H1 (cell line): ENCODE measurements at regions of chr13 and their contacts with region 1.

Region 1: DNA sequence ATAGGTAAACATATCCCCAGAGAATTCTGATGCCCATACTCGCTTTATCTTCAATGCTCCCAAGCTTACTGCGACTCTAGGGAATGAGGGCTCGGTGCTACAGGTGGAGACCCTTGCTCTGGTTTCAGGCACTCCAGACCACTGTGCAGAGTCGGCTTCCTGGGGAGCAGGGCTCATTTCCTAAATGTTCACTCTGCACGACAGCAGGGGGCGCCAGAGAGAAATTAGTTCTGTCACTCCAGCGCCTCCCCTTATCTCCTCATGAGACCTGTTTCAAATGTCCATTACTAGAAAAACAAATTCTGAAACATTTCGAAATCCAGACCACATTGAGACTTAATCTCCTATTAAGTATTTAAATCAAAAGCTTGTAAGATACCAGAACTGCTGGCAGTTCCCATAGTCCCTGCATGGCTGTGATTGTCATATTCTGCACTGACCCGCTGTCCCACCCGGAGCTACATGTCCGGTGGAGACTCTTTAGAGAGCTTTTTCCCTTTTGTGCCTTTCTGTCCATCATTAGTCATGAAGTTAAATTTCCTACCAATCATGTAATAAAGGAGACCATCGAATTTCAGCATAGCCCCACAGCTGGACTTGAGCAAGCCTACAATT is 22.4 kb downstream of the EPSTI1 start:
- DNase-seq: peak in 1 of 2 experiments; percentile 93
- H3K4me3 ChIP-seq: no peak overlapping the region
- H3K27ac ChIP-seq: no peak overlapping the region
- H3K4me1 ChIP-seq: peaks cover 3 to 12% (median 4%) of the 10 kb centered on the region in 4 experiments; a peak in 5 of 7 replicates
- H3K27me3 ChIP-seq: no peaks in the 10 kb centered on the region
- CTCF ChIP-seq: peak; percentile 71 to 82 (median 81)
- EP300 ChIP-seq: no peak
- POLR2A ChIP-seq: no peak
- RAD21 ChIP-seq: peak; percentile 67 to 72

Region 2: DNA sequence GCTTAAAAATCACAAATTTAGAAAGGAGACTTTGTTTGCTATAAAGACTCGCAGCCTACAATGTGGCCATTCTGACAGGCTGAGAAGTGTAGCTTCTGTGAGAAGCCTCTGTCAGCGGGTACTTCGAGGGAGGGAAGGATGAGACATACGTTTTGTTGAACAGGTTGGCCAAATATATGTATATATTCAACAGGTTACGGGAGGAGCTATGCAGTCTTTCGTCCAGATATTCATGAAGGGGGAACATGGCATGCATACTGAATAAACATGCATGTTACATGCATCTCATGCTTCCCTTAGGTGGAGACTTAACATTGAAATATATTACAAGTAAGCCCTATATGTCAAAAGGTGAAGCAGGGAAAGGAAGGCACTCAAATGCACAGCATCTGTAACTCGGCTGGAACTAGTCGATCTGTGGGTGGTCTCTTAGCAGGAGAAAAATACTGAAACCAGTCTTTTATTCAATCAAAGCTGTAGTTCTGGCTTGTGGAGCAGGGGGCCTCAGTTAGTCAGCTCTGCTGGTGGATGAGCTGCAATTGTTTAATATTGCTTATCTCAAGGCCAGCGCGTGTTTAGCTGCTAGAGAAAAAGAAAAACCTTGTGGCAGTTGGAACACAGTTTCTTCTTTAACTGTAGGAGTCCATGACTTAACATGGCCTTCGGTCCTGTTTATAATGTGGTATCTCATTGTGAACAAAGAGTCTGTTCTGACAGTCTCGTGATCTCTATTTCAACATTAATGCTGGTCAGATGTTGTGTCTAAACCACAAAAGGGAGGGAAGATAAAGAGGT is 94.0 kb before region 1 on chr13:
- CTCF ChIA-PET with region 1: interaction called, 17 read pairs
- POLR2A ChIA-PET with region 1: interaction called, 3 read pairs
- DNase-seq: peak in 1 of 2 experiments; percentile 43
- H3K4me3 ChIP-seq: peak overlapping the region; percentile 10 to 50 (median 16); a peak in 6 of 8 replicates
- H3K27ac ChIP-seq: peak overlapping the region; percentile 39; the same call in 1 of the 2 replicates
- H3K4me1 ChIP-seq: peaks cover 7 to 21% (median 16%) of the 10 kb centered on the region in 4 experiments; a peak in 6 of 7 replicates
- H3K27me3 ChIP-seq: no peaks in the 10 kb centered on the region; a peak in 2 of 7 replicates
- CTCF ChIP-seq: peak; percentile 6 to 62 (median 43)
- EP300 ChIP-seq: no peak; a peak in 1 of 3 replicates
- POLR2A ChIP-seq: no peak
- RAD21 ChIP-seq: peak; percentile 51

Region 3: DNA sequence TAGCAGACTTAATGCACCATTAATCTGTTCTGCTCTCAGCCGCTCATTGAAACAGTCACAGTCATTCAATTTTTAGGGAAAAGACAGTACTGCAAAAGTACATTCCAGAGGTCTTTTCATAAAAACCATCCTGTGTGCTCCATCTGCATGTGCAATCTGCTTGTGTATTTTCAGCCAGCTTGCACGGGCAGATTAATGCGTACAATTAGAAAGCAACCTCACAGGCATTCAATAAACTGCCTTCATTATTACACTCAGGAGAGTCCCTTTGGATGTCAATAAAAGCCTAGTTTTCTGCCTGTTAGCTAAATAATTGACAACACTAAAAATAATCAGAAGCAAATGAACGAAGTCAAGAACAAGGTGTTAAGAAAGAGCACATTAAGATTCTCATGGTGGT is 19.5 kb before region 1 on chr13:
- CTCF ChIA-PET with region 1: interaction called, 12 read pairs
- POLR2A ChIA-PET with region 1: no interaction called
- DNase-seq: no peak
- H3K4me3 ChIP-seq: no peak overlapping the region
- H3K27ac ChIP-seq: no peak overlapping the region
- H3K4me1 ChIP-seq: no peaks in the 10 kb centered on the region; a peak in 1 of 7 replicates
- H3K27me3 ChIP-seq: no peaks in the 10 kb centered on the region
- CTCF ChIP-seq: no peak
- EP300 ChIP-seq: no peak
- POLR2A ChIP-seq: no peak
- RAD21 ChIP-seq: no peak

Region 4: DNA sequence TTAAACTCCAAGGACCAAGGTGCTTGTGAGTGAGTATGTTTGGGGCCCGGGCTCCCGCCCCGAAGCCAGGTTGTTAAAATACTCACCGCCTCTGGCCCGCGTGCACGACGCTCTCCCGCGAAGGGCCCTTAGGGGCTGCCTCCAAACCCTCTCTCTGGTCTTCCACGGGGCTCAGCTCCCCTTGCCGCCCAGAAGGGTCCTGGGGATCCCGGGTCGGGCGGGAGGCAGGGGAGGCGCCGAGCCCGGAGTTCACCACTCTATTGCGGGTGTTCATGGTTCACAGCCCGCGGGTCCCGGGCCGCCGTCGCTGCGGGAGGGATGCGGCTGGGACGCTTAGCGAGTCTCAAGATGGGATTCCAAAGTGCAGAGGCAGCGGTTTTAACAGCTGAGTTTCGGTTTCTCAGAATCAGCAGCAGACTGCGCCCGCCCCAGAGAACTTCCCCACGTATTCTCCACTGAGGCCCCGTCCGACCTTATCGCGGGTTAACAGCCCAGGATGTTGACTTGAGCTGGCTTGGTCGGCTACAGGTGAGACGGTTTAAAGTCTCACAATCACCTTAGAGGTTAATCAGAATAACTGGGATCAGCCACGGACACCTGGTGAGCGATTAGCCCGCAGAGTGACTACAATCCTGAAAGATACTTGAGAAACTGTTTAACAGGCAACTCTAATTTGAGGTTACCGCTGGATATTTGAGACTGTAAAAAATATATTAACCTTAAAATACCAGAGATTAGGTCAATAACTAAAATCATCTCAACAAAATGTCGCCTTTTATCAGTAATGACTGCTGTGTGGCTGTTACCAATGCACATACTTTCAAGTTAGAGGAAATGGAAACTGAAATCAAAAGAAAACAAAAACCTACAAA is 22.5 kb after region 1 on chr13 and contains the start of gene EPSTI1:
- CTCF ChIA-PET with region 1: interaction called, 25 read pairs
- POLR2A ChIA-PET with region 1: no interaction called
- DNase-seq: peak in 1 of 2 experiments; percentile 76
- H3K4me3 ChIP-seq: peak within 1 kb of the TSS; percentile 19 to 65 (median 43)
- H3K27ac ChIP-seq: no peak within 1 kb of the TSS
- H3K4me1 ChIP-seq: peaks cover 0 to 5% (median 0%) of the 10 kb centered on the region in 4 experiments; a peak in 2 of 7 replicates
- H3K27me3 ChIP-seq: peaks cover 0 to 19% (median 13%) of the 10 kb centered on the region in 4 experiments; a peak in 6 of 7 replicates
- CTCF ChIP-seq: no peak
- EP300 ChIP-seq: no peak
- POLR2A ChIP-seq: no peak
- RAD21 ChIP-seq: no peak
- total RNA-seq, gene EPSTI1: 0.37 and 0.46 TPM in 2 replicates

Region 5: GRCh38 chr13:43132257-43132656 is 162.6 kb after region 1 on chr13:
- CTCF ChIA-PET with region 1: interaction called, 22 read pairs
- POLR2A ChIA-PET with region 1: no interaction called
- DNase-seq: peak in 1 of 2 experiments; percentile 27
- H3K4me3 ChIP-seq: no peak overlapping the region
- H3K27ac ChIP-seq: no peak overlapping the region
- H3K4me1 ChIP-seq: peaks cover 2 to 13% (median 6%) of the 10 kb centered on the region in 4 experiments; a peak in 5 of 7 replicates
- H3K27me3 ChIP-seq: no peaks in the 10 kb centered on the region; a peak in 1 of 7 replicates
- CTCF ChIP-seq: peak; percentile 24 to 93 (median 70)
- EP300 ChIP-seq: no peak
- POLR2A ChIP-seq: no peak
- RAD21 ChIP-seq: peak; percentile 88 to 92